ENCODE measurements at regions of chr4 and their contacts with region 1.

Region 1: GRCh38 chr4:11732155-11732554 is 303.5 kb upstream of the HS3ST1 start:
- DNase-seq: no peak
- H3K4me3 ChIP-seq: no peak overlapping the region
- H3K27ac ChIP-seq: no peak overlapping the region
- H3K4me1 ChIP-seq: no peaks in the 10 kb centered on the region
- H3K27me3 ChIP-seq: no peaks in the 10 kb centered on the region
- CTCF ChIP-seq: no peak
- POLR2A ChIP-seq: no peak

Region 2: DNA sequence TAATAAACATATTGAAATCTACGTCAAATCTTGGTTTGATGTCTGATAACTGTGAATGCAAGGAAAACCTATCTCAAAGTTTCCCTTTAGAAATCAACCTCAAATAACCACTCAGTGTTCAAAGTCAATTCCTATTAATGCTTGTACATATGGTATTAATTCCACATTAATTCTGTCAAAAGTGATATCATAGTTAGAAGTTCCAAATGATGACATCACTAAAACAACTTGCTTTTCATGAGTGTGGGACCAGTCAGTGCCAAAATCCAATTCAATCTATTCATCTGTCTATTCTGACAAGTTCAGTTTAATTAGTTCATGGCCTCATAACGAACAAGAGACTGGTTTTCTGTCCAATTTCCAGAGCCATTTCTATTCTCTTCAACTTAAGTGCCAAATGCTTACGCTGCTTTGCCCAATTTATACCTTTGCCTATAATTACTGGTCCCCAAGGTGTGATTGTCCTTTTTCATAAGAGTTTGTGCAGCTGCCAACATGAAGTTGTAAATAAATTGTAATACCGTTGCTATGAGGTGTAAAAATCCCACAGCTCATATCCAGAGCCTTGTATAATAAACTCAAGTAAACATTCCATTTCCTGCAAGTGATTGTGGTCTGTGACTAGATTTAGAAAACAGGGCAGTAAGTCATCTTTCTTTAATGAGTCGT is 1275.8 kb after region 1 on chr4:
- intact Hi-C with region 1: loop called (anchors 10 kb)
- DNase-seq: no peak
- H3K4me3 ChIP-seq: no peak overlapping the region
- H3K27ac ChIP-seq: no peak overlapping the region
- H3K4me1 ChIP-seq: no peaks in the 10 kb centered on the region
- H3K27me3 ChIP-seq: no peaks in the 10 kb centered on the region
- CTCF ChIP-seq: no peak
- POLR2A ChIP-seq: no peak